Gastrocnemius medialis (tissue), 4 donors: ENCODE measurements at regions of chr12 and their contacts with region 1.

Region 1: DNA sequence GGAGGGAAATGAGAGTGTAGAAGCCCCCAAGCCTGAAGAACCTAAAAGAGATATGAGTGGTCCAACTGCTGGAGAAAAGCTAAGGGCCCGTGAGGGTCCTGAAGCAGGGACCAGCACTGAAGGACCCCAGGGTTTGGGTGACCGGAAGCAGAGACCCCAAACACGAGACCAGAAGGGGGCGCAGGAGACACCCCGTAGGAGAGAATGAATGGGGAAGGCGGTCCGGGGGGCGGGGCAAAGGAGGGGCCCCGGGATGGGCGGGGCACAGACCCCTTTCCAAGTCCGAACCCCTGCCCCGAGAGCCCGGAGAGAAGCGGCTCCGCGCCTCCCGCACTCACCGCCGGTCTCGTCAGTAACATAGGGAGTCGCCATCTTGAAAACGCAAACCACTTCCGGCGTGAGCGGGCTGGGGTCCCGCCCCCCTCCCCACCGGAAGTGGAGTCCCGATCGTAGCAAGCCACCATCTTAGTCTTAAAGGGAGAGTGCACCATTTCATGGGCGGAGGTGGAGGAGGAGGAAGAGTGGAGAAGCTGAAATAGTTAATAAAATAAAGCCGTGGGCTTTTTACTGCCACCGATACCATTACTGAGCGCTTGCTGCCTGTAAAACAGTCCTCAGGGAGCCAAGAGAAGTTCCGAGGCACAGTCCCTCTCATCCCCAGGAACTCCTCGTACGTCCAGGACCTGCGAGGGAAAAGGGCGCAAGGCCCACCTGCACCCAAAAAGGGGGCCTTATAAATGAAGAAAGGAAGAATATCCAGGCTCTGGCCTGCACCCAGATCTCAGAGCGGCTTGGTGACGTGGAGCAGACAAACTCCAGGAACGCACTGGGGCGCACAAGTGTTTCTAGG is 731 bp downstream of the PYM1 start:
- DNase-seq: peak; percentile 72 to 84
- ATAC-seq: peak; percentile 93 to 95
- H3K4me3 ChIP-seq: peak overlapping the region; percentile 92 to 100 (median 94)
- H3K27ac ChIP-seq: peak overlapping the region; percentile 94 to 98 (median 98)
- H3K4me1 ChIP-seq: peaks cover 25 to 29% of the 10 kb centered on the region in 2 donors
- H3K27me3 ChIP-seq: peaks cover 0 to under 1% (median 0%) of the 10 kb centered on the region in 3 donors
- CTCF ChIP-seq: peak; percentile 56 to 82 (median 73)
- POLR2A ChIP-seq: peak in 1 of 2 donors; percentile 45

Region 2: GRCh38 chr12:55687746-55688145 is 239.2 kb before region 1 on chr12:
- in situ Hi-C with region 1: no loop called
- intact Hi-C with region 1: no loop called
- DNase-seq: no peak
- ATAC-seq: no peak
- H3K4me3 ChIP-seq: no peak overlapping the region
- H3K27ac ChIP-seq: peak overlapping the region in 1 of 4 donors; percentile 27
- H3K4me1 ChIP-seq: peaks cover 0 to 2% of the 10 kb centered on the region in 2 donors
- H3K27me3 ChIP-seq: no peaks in the 10 kb centered on the region
- CTCF ChIP-seq: no peak
- POLR2A ChIP-seq: no peak

Region 3: DNA sequence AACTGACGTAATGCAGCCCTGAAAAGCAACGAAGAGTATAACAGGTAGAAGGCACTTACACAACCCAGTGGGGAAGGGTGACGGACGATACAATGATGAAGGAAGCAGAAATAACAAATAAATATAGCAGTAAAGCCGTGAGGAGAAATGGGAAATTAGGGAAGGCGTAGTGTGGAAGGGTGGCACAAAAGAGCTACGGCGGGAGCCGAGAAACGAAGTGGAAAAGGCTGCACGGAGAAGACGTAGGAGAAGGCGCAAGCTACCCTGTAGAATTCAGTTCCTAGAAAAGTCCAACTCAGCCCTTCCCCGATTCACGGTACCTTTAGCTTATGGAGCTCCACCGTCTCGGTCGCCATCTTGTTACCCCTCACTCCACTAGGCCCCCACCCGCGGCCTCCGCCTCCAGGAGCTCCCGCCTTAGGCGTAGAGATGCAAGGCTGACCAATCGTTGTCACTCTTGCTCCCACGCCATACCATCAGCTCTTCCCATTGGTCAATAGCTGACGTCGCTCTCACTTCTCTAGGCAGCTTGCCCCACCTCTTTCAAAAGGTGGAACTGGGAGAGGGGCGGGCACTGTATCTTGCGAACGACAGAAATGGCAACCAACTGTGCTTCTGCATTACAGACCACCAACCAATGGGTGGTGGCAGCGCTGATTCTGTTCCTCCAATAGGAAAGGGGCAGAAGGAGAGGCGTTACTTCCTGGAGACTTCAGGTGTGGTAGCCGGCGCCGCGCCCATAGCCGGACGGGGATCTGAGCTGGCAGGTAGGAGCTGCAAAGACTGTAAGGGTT is 109.4 kb before region 1 on chr12 and contains the starts of genes ORMDL2 and SARNP:
- in situ Hi-C with region 1: loop called (anchors 5 to 25 kb)
- intact Hi-C with region 1: loop called (anchors 2 kb)
- DNase-seq: peak; percentile 99
- ATAC-seq: peak; percentile 99 to 100
- H3K4me3 ChIP-seq: peak within 1 kb of the TSS; percentile 73 to 96 (median 82)
- H3K27ac ChIP-seq: peak within 1 kb of the TSS; percentile 89 to 93 (median 90)
- H3K4me1 ChIP-seq: peaks cover 22 to 31% of the 10 kb centered on the region in 2 donors
- H3K27me3 ChIP-seq: no peaks in the 10 kb centered on the region
- CTCF ChIP-seq: no peak
- POLR2A ChIP-seq: peak; percentile 59 to 70
- total RNA-seq, gene ORMDL2: 6.6 to 23.1 (median 12.1) TPM
- total RNA-seq, gene SARNP: 46.5 to 66.2 (median 62.8) TPM

Region 4: GRCh38 chr12:55940065-55940732 is 13.2 kb after region 1 on chr12:
- in situ Hi-C with region 1: no loop called
- intact Hi-C with region 1: loop called (anchors 1 kb)
- DNase-seq: peak; percentile 66 to 75
- ATAC-seq: peak; percentile 92 to 99
- H3K4me3 ChIP-seq: peak overlapping the region; percentile 25 to 43 (median 37)
- H3K27ac ChIP-seq: no peak overlapping the region
- H3K4me1 ChIP-seq: peaks cover 0 to 5% of the 10 kb centered on the region in 2 donors
- H3K27me3 ChIP-seq: peaks cover 0 to 5% (median 2%) of the 10 kb centered on the region in 3 donors
- CTCF ChIP-seq: peak; percentile 74 to 95 (median 88)
- POLR2A ChIP-seq: no peak

Region 5: GRCh38 chr12:55973598-55974307 is 46.8 kb after region 1 on chr12 and contains the start of gene RAB5B:
- in situ Hi-C with region 1: no loop called
- intact Hi-C with region 1: loop called (anchors 1 kb)
- DNase-seq: peak; percentile 100
- ATAC-seq: peak; percentile 90 to 96
- H3K4me3 ChIP-seq: peak within 1 kb of the TSS; percentile 86 to 100 (median 98)
- H3K27ac ChIP-seq: peak within 1 kb of the TSS; percentile 95 to 100 (median 98)
- H3K4me1 ChIP-seq: peaks cover 28 to 36% of the 10 kb centered on the region in 2 donors
- H3K27me3 ChIP-seq: no peaks in the 10 kb centered on the region
- CTCF ChIP-seq: peak in 3 of 5 experiments; percentile 14 to 60 (median 37)
- POLR2A ChIP-seq: peak; percentile 97
- total RNA-seq, gene RAB5B: 75.5 to 84.9 (median 81.8) TPM